ENCODE measurements at regions of chr2 and their contacts with region 1.

Region 1: GRCh38 chr2:17821535-17822444 is 5.5 kb downstream of the MSGN1 start:
- DNase-seq: no peak
- H3K4me3 ChIP-seq: no peak overlapping the region
- H3K27ac ChIP-seq: no peak overlapping the region
- H3K4me1 ChIP-seq: no peaks in the 10 kb centered on the region
- H3K27me3 ChIP-seq: no peaks in the 10 kb centered on the region
- CTCF ChIP-seq: no peak

Region 2: DNA sequence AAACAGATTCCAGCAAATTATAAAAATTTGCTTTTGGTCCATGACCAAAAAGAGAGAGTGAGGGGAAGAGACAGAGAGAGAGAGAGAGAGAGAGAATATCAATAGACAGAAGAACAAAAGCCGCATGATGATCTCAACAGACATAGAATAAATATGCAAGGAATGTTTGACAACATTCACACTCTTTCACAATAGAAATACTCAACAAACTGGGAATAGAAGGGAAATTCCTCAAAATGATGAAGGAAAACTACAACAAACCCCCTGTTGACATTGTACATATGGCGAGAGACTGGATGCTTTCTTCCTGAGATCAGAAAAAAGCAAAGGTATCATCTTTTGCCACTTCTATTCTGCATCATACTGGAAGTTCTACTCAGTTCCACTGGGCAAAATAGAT is 613.3 kb before region 1 on chr2:
- intact Hi-C with region 1: no loop called
- DNase-seq: no peak
- H3K4me3 ChIP-seq: no peak overlapping the region
- H3K27ac ChIP-seq: no peak overlapping the region
- H3K4me1 ChIP-seq: no peaks in the 10 kb centered on the region
- H3K27me3 ChIP-seq: no peaks in the 10 kb centered on the region
- CTCF ChIP-seq: no peak

Region 3: GRCh38 chr2:17753803-17754663 is 67.8 kb before region 1 on chr2 and contains the starts of genes GEN1 and SMC6:
- intact Hi-C with region 1: loop called (anchors 10 kb)
- DNase-seq: peak; percentile 94
- H3K4me3 ChIP-seq: peak within 1 kb of the TSS; percentile 92
- H3K27ac ChIP-seq: peak within 1 kb of the TSS; percentile 90
- H3K4me1 ChIP-seq: no peaks in the 10 kb centered on the region
- H3K27me3 ChIP-seq: no peaks in the 10 kb centered on the region
- CTCF ChIP-seq: no peak
- total RNA-seq, gene GEN1: 13.1 to 30.0 TPM
- total RNA-seq, gene SMC6: 23.3 to 25.2 TPM

Region 4: GRCh38 chr2:17879101-17879912 is 57.5 kb after region 1 on chr2:
- intact Hi-C with region 1: no loop called
- DNase-seq: peak; percentile 92
- H3K4me3 ChIP-seq: peak overlapping the region; percentile 79
- H3K27ac ChIP-seq: peak overlapping the region; percentile 77
- H3K4me1 ChIP-seq: no peaks in the 10 kb centered on the region
- H3K27me3 ChIP-seq: peaks cover 11% of the 10 kb centered on the region
- CTCF ChIP-seq: no peak